ENCODE measurements at regions of chr3 and their contacts with region 1.

Region 1: GRCh38 chr3:33074217-33075067 is 22.5 kb downstream of the GLB1 start:
- DNase-seq: peak; percentile 48
- ATAC-seq: peak; percentile 98
- H3K4me3 ChIP-seq: no peak overlapping the region
- H3K27ac ChIP-seq: no peak overlapping the region
- H3K4me1 ChIP-seq: no peaks in the 10 kb centered on the region
- H3K27me3 ChIP-seq: no peaks in the 10 kb centered on the region
- CTCF ChIP-seq: peak; percentile 66 to 96 (median 95); a peak in 5 of 6 replicates
- POLR2A ChIP-seq: no peak
- RAD21 ChIP-seq: peak; percentile 77

Region 2: GRCh38 chr3:32947789-32948238 is 126.6 kb before region 1 on chr3:
- CTCF ChIA-PET with region 1: interaction called, 8 read pairs
- POLR2A ChIA-PET with region 1: no interaction called
- RAD21 ChIA-PET with region 1: interaction called, 3 to 4 read pairs
- intact Hi-C with region 1: loop called (anchors 1 kb)
- DNase-seq: peak; percentile 88
- ATAC-seq: peak; percentile 97
- H3K4me3 ChIP-seq: no peak overlapping the region
- H3K27ac ChIP-seq: no peak overlapping the region
- H3K4me1 ChIP-seq: peaks cover 0 to 14% of the 10 kb centered on the region in 2 experiments; a peak in 2 of 4 replicates
- H3K27me3 ChIP-seq: no peaks in the 10 kb centered on the region
- CTCF ChIP-seq: peak; percentile 79 to 88 (median 83)
- POLR2A ChIP-seq: no peak
- RAD21 ChIP-seq: peak; percentile 96